CD4-positive, alpha-beta T cell (primary cell): ENCODE measurements at regions of chr11 and their contacts with region 1.

Region 1: DNA sequence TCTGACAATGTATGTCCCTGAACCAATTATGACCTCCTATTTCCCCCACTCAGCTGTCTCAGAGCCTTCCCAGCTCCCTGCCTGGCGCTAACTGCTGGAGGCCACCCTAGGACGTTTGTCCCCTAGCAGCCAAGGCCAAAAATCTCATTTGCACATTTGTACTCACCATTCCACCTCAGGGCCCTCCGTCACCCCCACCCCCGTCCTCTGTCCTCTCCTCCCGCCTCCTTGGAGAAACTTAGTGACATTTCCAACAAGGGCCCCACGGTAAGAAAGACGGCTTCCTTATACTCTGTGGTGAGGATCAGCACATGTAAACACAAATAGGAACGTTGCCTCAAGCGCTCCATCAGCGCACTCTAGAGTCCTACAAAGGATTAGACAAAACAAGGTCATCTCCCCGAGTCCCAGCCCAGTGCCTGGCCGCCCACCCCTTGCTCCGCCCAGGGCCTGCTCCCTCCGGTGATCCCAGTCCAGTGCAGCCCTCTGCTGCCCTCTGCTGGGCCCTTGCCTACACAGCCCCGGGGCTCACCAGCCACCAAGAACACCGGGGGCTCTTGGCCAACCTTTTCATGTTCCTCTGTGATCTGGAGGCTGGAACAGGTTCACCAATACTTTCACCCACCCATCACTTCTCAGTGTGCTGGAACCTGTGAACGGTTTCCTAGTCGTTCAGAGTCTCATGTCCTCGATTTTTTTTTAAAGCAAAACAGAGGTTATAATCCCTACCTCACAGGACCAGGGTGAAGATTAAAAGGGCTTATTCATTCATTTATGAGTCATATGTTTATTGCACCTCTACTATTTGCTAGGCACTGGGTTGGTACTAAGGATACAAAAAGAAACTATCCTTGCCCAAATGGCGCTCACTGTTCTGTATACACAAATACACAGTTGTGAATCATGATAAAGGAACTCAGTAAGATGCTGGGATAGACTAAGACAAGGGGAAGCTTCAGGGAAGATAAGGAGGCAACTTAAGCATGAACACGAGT is 15.3 kb upstream of the CTR9 start:
- DNase-seq: peak; percentile 70 to 91 (median 81)
- ATAC-seq: peak; percentile 99
- H3K4me3 ChIP-seq: peak overlapping the region; percentile 26
- H3K4me3 Mint-ChIP-seq: peak overlapping the region; percentile 20
- H3K27ac ChIP-seq: no peak overlapping the region
- H3K27ac Mint-ChIP-seq: no peak overlapping the region
- H3K4me1 ChIP-seq: peaks cover 9% of the 10 kb centered on the region
- H3K4me1 Mint-ChIP-seq: peaks cover 8% of the 10 kb centered on the region
- H3K27me3 ChIP-seq: no peaks in the 10 kb centered on the region
- H3K27me3 Mint-ChIP-seq: no peaks in the 10 kb centered on the region
- CTCF ChIP-seq: peak; percentile 97

Region 2: GRCh38 chr11:9757809-9758636 is 977.8 kb before region 1 on chr11:
- CTCF ChIA-PET with region 1: no interaction called
- POLR2A ChIA-PET with region 1: no interaction called
- intact Hi-C with region 1: loop called in 1 of 2 experiments (anchors 10 kb)
- DNase-seq: peak; percentile 83 to 97 (median 89)
- ATAC-seq: peak; percentile 81
- H3K4me3 ChIP-seq: peak overlapping the region; percentile 75
- H3K4me3 Mint-ChIP-seq: peak overlapping the region; percentile 88
- H3K27ac ChIP-seq: no peak overlapping the region
- H3K27ac Mint-ChIP-seq: peak overlapping the region; percentile 79
- H3K4me1 ChIP-seq: peaks cover 21% of the 10 kb centered on the region
- H3K4me1 Mint-ChIP-seq: peaks cover 17% of the 10 kb centered on the region
- H3K27me3 ChIP-seq: no peaks in the 10 kb centered on the region
- H3K27me3 Mint-ChIP-seq: no peaks in the 10 kb centered on the region
- CTCF ChIP-seq: peak; percentile 62

Region 3: DNA sequence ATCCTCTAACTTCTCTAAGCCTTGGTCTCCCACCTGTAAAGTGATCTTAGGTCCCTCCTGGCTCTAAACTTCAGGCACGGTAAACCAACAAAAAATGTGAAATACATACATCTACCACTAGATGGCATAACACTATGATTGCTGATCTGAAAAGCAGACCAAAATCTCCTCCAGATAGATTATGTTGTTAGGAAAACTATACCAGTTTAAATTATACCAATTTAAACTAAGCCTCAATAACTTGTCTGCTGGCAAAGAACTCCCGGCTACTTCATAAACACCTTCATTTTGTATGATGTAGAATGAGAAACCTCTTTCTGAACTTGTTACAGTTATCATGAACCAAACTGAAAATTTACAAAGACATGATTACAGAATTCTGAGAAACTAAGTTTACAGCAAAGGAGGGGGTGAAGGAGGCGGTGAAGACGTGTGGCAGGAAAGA is 527.6 kb before region 1 on chr11:
- CTCF ChIA-PET with region 1: no interaction called
- POLR2A ChIA-PET with region 1: no interaction called
- intact Hi-C with region 1: loop called in 1 of 2 experiments (anchors 5 kb)
- DNase-seq: peak in 3 of 14 experiments; percentile 57 to 71 (median 70)
- ATAC-seq: peak; percentile 66
- H3K4me3 ChIP-seq: no peak overlapping the region
- H3K4me3 Mint-ChIP-seq: no peak overlapping the region
- H3K27ac ChIP-seq: no peak overlapping the region
- H3K27ac Mint-ChIP-seq: no peak overlapping the region
- H3K4me1 ChIP-seq: no peaks in the 10 kb centered on the region
- H3K4me1 Mint-ChIP-seq: no peaks in the 10 kb centered on the region
- H3K27me3 ChIP-seq: no peaks in the 10 kb centered on the region
- H3K27me3 Mint-ChIP-seq: no peaks in the 10 kb centered on the region
- CTCF ChIP-seq: peak; percentile 77

Region 4: DNA sequence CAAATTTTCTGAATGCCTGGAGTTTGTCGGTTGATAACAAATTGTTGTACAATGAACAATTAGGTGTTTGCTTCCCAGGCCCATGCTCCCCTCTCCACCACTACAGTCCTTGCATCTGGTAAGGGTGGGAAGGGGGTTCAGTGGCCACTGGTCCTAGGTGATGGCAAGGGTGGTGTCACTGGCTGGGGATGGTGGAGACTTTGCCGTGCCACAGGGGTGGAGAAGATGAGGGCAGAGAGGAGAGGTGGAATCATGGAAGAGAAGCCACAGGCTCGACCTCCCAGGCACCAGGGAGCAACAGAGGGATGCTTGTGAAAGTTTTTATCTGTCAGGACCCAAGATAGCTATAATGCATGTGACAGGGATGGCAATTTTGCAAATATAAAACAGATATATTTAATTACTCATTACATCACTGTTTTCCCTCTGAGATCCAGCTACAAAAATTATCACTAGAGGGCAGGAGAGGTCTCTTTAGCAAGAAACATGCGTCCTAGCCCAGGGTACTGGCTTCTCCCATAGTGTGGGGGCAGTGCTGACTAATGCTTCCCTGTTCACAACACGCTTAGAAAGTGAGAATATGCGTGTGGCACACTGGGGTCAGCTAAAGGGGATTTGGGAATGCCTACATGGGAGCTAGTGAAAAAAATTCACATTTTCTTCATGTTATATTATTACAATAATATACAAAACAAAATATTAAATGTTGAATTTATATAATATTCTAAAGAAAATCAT is 329.8 kb before region 1 on chr11:
- CTCF ChIA-PET with region 1: interaction called, 5 read pairs
- POLR2A ChIA-PET with region 1: no interaction called
- intact Hi-C with region 1: loop called (anchors 1 kb)
- DNase-seq: peak in 13 of 14 experiments; percentile 10 to 80 (median 24)
- ATAC-seq: peak; percentile 88
- H3K4me3 ChIP-seq: no peak overlapping the region
- H3K4me3 Mint-ChIP-seq: no peak overlapping the region
- H3K27ac ChIP-seq: no peak overlapping the region
- H3K27ac Mint-ChIP-seq: no peak overlapping the region
- H3K4me1 ChIP-seq: peaks cover 18% of the 10 kb centered on the region
- H3K4me1 Mint-ChIP-seq: peaks cover 34% of the 10 kb centered on the region
- H3K27me3 ChIP-seq: no peaks in the 10 kb centered on the region
- H3K27me3 Mint-ChIP-seq: no peaks in the 10 kb centered on the region
- CTCF ChIP-seq: peak; percentile 72

Region 5: DNA sequence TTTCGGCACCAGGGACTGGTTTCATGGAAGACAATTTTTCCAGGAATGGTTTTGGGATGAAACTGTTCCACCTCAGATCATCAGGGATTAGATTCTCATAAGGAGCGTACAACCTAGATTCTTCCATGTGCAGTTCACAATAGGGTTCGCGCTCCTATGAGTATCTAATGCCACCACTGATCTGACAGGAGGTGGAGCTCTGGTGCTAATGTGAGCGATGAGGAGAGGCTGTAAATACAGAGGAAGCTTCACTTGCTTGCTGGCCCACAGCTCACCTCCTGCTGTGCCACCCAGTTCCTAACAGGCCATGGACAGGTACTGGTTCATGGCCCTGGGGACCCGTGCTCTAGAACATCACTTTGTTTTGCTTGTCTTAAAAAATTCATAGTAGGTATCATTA is 322.5 kb before region 1 on chr11:
- CTCF ChIA-PET with region 1: interaction called, 6 read pairs
- POLR2A ChIA-PET with region 1: no interaction called
- intact Hi-C with region 1: loop called (anchors 1 kb)
- DNase-seq: peak; percentile 20 to 78 (median 44)
- ATAC-seq: peak; percentile 92
- H3K4me3 ChIP-seq: no peak overlapping the region
- H3K4me3 Mint-ChIP-seq: no peak overlapping the region
- H3K27ac ChIP-seq: no peak overlapping the region
- H3K27ac Mint-ChIP-seq: no peak overlapping the region
- H3K4me1 ChIP-seq: peaks cover 32% of the 10 kb centered on the region
- H3K4me1 Mint-ChIP-seq: peaks cover 50% of the 10 kb centered on the region
- H3K27me3 ChIP-seq: no peaks in the 10 kb centered on the region
- H3K27me3 Mint-ChIP-seq: no peaks in the 10 kb centered on the region
- CTCF ChIP-seq: peak; percentile 61

Region 6: DNA sequence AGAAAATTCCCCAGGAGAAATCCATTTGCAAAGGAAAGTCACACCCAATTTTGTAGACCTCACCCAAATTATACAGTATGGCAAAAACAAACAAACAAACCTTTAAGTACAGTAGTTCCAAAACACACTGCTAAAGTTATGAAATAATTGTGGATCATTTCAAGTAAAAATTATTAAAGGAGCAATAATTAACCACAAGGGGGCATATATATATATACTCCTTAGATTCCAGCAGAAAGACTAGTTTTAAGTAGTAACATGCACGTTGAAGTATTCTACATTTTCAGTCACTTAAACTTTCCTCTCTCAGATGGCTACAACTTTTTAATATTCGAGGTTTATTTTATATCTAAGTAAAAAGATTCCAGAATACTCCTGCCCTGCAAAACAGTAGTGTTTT is 221.6 kb before region 1 on chr11:
- CTCF ChIA-PET with region 1: no interaction called
- POLR2A ChIA-PET with region 1: no interaction called
- intact Hi-C with region 1: loop called (anchors 10 kb)
- DNase-seq: no peak
- ATAC-seq: no peak
- H3K4me3 ChIP-seq: no peak overlapping the region
- H3K4me3 Mint-ChIP-seq: no peak overlapping the region
- H3K27ac ChIP-seq: no peak overlapping the region
- H3K27ac Mint-ChIP-seq: no peak overlapping the region
- H3K4me1 ChIP-seq: no peaks in the 10 kb centered on the region
- H3K4me1 Mint-ChIP-seq: no peaks in the 10 kb centered on the region
- H3K27me3 ChIP-seq: no peaks in the 10 kb centered on the region
- H3K27me3 Mint-ChIP-seq: no peaks in the 10 kb centered on the region
- CTCF ChIP-seq: no peak

Region 7: GRCh38 chr11:10725114-10725906 is 10.5 kb before region 1 on chr11:
- CTCF ChIA-PET with region 1: no interaction called
- POLR2A ChIA-PET with region 1: no interaction called
- intact Hi-C with region 1: no loop called
- DNase-seq: peak in 3 of 14 experiments; percentile 46 to 70 (median 61)
- ATAC-seq: peak; percentile 73
- H3K4me3 ChIP-seq: no peak overlapping the region
- H3K4me3 Mint-ChIP-seq: no peak overlapping the region
- H3K27ac ChIP-seq: no peak overlapping the region
- H3K27ac Mint-ChIP-seq: no peak overlapping the region
- H3K4me1 ChIP-seq: peaks cover 14% of the 10 kb centered on the region
- H3K4me1 Mint-ChIP-seq: peaks cover 14% of the 10 kb centered on the region
- H3K27me3 ChIP-seq: no peaks in the 10 kb centered on the region
- H3K27me3 Mint-ChIP-seq: peaks cover 12% of the 10 kb centered on the region
- CTCF ChIP-seq: no peak

Region 8: GRCh38 chr11:10750838-10751580 is 15.2 kb after region 1 on chr11 and contains the start of gene CTR9:
- CTCF ChIA-PET with region 1: no interaction called
- POLR2A ChIA-PET with region 1: no interaction called
- intact Hi-C with region 1: no loop called
- DNase-seq: peak; percentile 82 to 96 (median 90)
- ATAC-seq: peak; percentile 86
- H3K4me3 ChIP-seq: peak within 1 kb of the TSS; percentile 95
- H3K4me3 Mint-ChIP-seq: peak within 1 kb of the TSS; percentile 97
- H3K27ac ChIP-seq: peak within 1 kb of the TSS; percentile 83 to 84
- H3K27ac Mint-ChIP-seq: peak within 1 kb of the TSS; percentile 93
- H3K4me1 ChIP-seq: peaks cover 14% of the 10 kb centered on the region
- H3K4me1 Mint-ChIP-seq: peaks cover 35% of the 10 kb centered on the region
- H3K27me3 ChIP-seq: no peaks in the 10 kb centered on the region
- H3K27me3 Mint-ChIP-seq: no peaks in the 10 kb centered on the region
- CTCF ChIP-seq: no peak
- total RNA-seq, gene CTR9: 34.0 to 34.7 TPM